Activated naive CD4-positive, alpha-beta T cell treated with anti-CD3 and anti-CD28 coated beads for 36 hours (primary cell): ENCODE measurements at regions of chr5 and their contacts with region 1.

Region 1: GRCh38 chr5:128213340-128213739 is 129.8 kb downstream of the SLC12A2 start:
- DNase-seq: peak; percentile 73
- H3K4me3 Mint-ChIP-seq: no peak overlapping the region
- H3K27ac Mint-ChIP-seq: no peak overlapping the region
- H3K4me1 Mint-ChIP-seq: peaks cover 2% of the 10 kb centered on the region
- H3K27me3 Mint-ChIP-seq: no peaks in the 10 kb centered on the region

Region 2: GRCh38 chr5:128498844-128499455 is 285.6 kb after region 1 on chr5:
- CTCF ChIA-PET with region 1: no interaction called
- intact Hi-C with region 1: loop called (anchors 1 kb)
- DNase-seq: no peak
- H3K4me3 Mint-ChIP-seq: no peak overlapping the region
- H3K27ac Mint-ChIP-seq: no peak overlapping the region
- H3K4me1 Mint-ChIP-seq: no peaks in the 10 kb centered on the region
- H3K27me3 Mint-ChIP-seq: no peaks in the 10 kb centered on the region

Region 3: GRCh38 chr5:128674825-128675446 is 461.6 kb after region 1 on chr5:
- CTCF ChIA-PET with region 1: interaction called, 4 read pairs
- intact Hi-C with region 1: loop called (anchors 1 kb)
- DNase-seq: peak; percentile 62
- H3K4me3 Mint-ChIP-seq: no peak overlapping the region
- H3K27ac Mint-ChIP-seq: no peak overlapping the region
- H3K4me1 Mint-ChIP-seq: no peaks in the 10 kb centered on the region
- H3K27me3 Mint-ChIP-seq: peaks cover 13% of the 10 kb centered on the region

Region 4: DNA sequence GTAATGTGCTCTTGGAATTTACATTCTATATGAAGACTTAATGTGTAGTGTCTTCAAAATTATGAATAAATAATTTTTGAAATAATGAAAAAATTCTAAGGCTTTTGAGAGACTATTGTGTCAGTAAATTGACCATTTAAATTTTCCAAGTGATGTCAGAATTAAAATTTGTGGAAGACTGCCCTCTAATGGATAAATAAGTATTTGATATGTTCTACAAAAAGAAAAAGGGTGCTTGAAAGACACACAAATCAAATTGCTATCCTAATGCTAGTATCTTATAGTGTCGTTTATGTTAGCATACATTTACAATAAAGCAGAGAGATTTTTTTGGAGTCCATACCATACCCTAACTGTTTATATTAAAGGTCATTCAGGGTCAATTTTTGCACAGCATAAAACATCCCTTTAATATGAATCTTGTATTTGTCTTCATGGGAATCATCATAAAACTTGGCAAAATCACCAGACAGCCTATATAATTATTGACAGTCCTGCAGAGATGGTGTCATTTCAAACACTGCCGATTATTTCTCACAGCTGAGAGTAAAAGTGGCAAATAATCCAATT is 631.1 kb after region 1 on chr5:
- CTCF ChIA-PET with region 1: no interaction called
- intact Hi-C with region 1: loop called (anchors 1 kb)
- DNase-seq: no peak
- H3K4me3 Mint-ChIP-seq: no peak overlapping the region
- H3K27ac Mint-ChIP-seq: no peak overlapping the region
- H3K4me1 Mint-ChIP-seq: no peaks in the 10 kb centered on the region
- H3K27me3 Mint-ChIP-seq: no peaks in the 10 kb centered on the region

Region 5: DNA sequence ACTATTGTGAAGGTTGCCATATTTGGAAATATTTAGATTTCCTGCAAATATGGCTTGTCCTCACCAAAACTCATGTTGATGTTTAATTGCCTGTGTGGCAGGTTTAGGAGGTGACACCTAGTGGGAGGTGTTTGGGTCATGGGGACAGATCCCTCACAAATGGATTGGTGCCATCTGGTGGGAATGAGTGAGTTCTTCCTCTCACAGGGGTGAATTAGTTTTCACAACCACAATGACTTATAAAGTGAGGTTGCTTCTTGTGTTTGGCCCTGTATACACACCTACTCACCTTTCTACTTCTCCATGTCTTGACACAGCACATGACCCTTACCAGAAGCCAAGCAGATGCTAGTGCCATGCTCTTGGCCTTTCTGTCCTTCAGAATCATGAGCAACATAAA is 922.3 kb after region 1 on chr5:
- CTCF ChIA-PET with region 1: no interaction called
- intact Hi-C with region 1: loop called (anchors 10 kb)
- DNase-seq: peak; percentile 35
- H3K4me3 Mint-ChIP-seq: no peak overlapping the region
- H3K27ac Mint-ChIP-seq: no peak overlapping the region
- H3K4me1 Mint-ChIP-seq: no peaks in the 10 kb centered on the region
- H3K27me3 Mint-ChIP-seq: no peaks in the 10 kb centered on the region

Region 6: GRCh38 chr5:129852747-129853352 is 1639.5 kb after region 1 on chr5:
- CTCF ChIA-PET with region 1: no interaction called
- intact Hi-C with region 1: loop called (anchors 1 kb)
- DNase-seq: peak; percentile 85
- H3K4me3 Mint-ChIP-seq: no peak overlapping the region
- H3K27ac Mint-ChIP-seq: no peak overlapping the region
- H3K4me1 Mint-ChIP-seq: no peaks in the 10 kb centered on the region
- H3K27me3 Mint-ChIP-seq: peaks cover 18% of the 10 kb centered on the region